Caco-2 (cell line): ENCODE measurements at regions of chr4 and their contacts with region 1.

Region 1: DNA sequence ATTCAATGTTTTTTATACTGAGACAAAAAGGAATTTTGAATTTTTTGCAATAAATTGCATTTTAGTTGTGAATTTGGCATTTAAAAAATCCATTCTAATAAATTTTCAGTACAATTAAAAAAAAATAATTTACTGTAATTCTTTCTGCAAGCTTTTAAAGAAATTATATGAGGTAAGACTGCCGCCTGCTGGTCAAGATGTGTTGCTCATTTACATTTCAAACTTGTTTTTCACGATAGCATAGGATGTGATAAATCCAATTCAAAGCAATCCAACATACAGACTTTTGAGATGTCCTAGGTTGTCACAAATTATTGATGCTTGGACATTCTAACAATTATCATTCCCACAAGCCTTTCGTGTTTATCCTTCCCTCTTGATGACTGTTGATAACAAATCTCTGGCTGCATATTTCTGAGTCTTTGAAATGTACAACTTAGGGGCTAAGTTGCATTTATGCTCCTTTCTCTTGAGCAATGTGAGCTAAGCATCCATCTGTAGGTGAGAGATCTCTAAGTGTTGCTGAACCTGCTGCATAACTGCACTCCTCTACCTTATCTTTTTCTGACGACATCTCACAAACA is 21.7 kb upstream of the MFAP3L start:
- DNase-seq: peak in 1 of 2 experiments; percentile 39
- H3K4me3 ChIP-seq: no peak overlapping the region
- H3K4me3 Mint-ChIP-seq: no peak overlapping the region
- H3K27ac Mint-ChIP-seq: no peak overlapping the region
- H3K4me1 ChIP-seq: no peaks in the 10 kb centered on the region
- H3K4me1 Mint-ChIP-seq: no peaks in the 10 kb centered on the region
- H3K27me3 ChIP-seq: no peaks in the 10 kb centered on the region
- H3K27me3 Mint-ChIP-seq: peaks cover 4% of the 10 kb centered on the region
- CTCF ChIP-seq: peak; percentile 50 to 53

Region 2: GRCh38 chr4:169791527-169792156 is 256.2 kb before region 1 on chr4:
- CTCF ChIA-PET with region 1: no interaction called
- POLR2A ChIA-PET with region 1: no interaction called
- intact Hi-C with region 1: loop called (anchors 1 kb)
- DNase-seq: peak; percentile 58 to 60
- H3K4me3 ChIP-seq: no peak overlapping the region
- H3K4me3 Mint-ChIP-seq: peak overlapping the region; percentile 65
- H3K27ac Mint-ChIP-seq: no peak overlapping the region
- H3K4me1 ChIP-seq: no peaks in the 10 kb centered on the region
- H3K4me1 Mint-ChIP-seq: peaks cover 6% of the 10 kb centered on the region
- H3K27me3 ChIP-seq: no peaks in the 10 kb centered on the region
- H3K27me3 Mint-ChIP-seq: peaks cover 30% of the 10 kb centered on the region
- CTCF ChIP-seq: peak; percentile 49 to 55

Region 3: DNA sequence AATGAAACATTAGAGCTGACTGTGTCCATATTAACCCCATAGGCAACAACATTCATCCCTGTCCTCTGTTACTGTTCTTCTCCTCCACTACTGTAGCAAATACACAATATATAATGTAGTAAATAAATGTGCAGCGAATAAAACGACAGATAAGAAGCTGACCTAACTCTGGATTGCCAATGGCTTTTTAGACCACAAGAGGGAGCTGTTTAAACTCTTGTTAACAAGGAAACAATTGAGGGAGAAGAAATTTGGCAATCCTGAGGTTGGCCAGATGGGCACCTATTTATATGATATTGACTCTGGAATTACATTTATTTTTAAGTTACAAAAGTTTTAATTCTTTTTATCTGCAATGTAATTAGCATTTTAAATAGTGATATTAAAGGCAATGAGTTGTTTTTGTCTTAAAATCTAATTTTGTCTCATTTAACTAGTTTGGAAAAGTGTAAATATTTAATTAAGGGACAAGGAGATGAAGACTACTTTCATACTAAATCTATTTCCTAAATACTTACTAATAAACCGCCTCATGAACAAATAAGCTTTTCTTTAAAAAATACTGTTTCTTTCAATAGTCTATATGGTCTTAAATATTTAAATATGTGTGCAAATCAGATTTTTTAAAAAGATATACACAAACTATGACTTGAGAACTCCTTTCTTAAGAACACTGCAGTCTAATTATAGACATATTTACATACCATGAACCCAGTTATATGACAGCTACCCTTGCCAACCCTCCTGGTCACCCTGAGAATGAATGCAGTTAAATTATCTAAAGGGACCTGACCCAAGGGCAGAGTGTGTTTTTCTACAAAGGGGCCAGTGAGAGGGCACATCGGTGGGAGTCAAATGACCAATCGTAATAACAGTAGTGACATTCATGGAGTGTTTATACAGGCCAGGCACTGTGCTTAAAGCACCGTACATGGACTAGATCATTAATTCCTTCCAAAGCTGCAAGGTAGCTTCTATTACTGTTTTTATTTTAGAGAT is 237.2 kb before region 1 on chr4:
- CTCF ChIA-PET with region 1: interaction called, 11 read pairs
- POLR2A ChIA-PET with region 1: no interaction called
- intact Hi-C with region 1: loop called (anchors 1 kb)
- DNase-seq: peak in 1 of 2 experiments; percentile 59
- H3K4me3 ChIP-seq: no peak overlapping the region
- H3K4me3 Mint-ChIP-seq: no peak overlapping the region
- H3K27ac Mint-ChIP-seq: no peak overlapping the region
- H3K4me1 ChIP-seq: no peaks in the 10 kb centered on the region
- H3K4me1 Mint-ChIP-seq: no peaks in the 10 kb centered on the region
- H3K27me3 ChIP-seq: no peaks in the 10 kb centered on the region
- H3K27me3 Mint-ChIP-seq: peaks cover 3% of the 10 kb centered on the region
- CTCF ChIP-seq: peak; percentile 57 to 70

Region 4: DNA sequence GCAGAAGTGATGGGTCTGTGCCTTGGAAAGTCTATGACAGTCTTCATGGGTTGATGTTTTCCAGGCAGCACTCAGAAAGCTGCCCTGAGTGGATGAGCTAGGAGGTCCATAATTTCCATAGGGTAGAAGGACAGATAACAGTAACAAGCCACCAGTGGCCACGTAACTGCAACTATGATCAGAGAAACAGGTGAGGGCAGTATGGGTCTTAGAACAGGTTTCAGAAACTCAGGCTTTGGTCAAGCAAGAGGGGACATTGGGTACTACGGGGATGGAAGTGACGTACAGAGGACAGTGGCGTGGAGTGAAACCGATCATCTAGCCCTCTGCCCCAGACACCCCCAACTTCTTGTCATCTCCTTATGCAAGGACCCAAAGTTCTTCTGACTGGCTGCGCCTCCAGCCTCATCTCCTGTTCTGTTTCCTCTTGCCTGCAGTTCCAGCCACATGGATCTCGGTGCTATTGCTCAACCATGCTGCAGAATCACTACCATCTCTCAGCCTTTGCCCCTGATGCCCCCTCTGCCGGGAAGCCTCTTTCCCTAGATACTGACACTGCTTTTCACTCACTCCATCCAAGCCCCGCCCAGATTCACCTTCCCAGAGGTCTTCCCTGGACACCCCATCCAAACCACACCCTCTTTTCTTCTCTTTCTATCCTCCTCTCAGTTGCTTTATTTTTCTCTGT is 145.1 kb before region 1 on chr4:
- CTCF ChIA-PET with region 1: no interaction called
- POLR2A ChIA-PET with region 1: no interaction called
- intact Hi-C with region 1: loop called (anchors 1 kb)
- DNase-seq: peak in 1 of 2 experiments; percentile 22
- H3K4me3 ChIP-seq: no peak overlapping the region
- H3K4me3 Mint-ChIP-seq: no peak overlapping the region
- H3K27ac Mint-ChIP-seq: no peak overlapping the region
- H3K4me1 ChIP-seq: no peaks in the 10 kb centered on the region
- H3K4me1 Mint-ChIP-seq: no peaks in the 10 kb centered on the region
- H3K27me3 ChIP-seq: no peaks in the 10 kb centered on the region
- H3K27me3 Mint-ChIP-seq: peaks cover 11% of the 10 kb centered on the region
- CTCF ChIP-seq: peak in 1 of 2 experiments; percentile 8

Region 5: GRCh38 chr4:170109586-170110284 is 61.9 kb after region 1 on chr4:
- CTCF ChIA-PET with region 1: no interaction called
- POLR2A ChIA-PET with region 1: no interaction called
- intact Hi-C with region 1: no loop called
- DNase-seq: no peak
- H3K4me3 ChIP-seq: no peak overlapping the region
- H3K4me3 Mint-ChIP-seq: no peak overlapping the region
- H3K27ac Mint-ChIP-seq: no peak overlapping the region
- H3K4me1 ChIP-seq: peaks cover 7% of the 10 kb centered on the region; the same call in 1 of the 2 replicates
- H3K4me1 Mint-ChIP-seq: peaks cover 6% of the 10 kb centered on the region
- H3K27me3 ChIP-seq: no peaks in the 10 kb centered on the region
- H3K27me3 Mint-ChIP-seq: no peaks in the 10 kb centered on the region
- CTCF ChIP-seq: no peak